GM12878 (cell line): ENCODE measurements at regions of chr14 and their contacts with region 1.

Region 1: GRCh38 chr14:76352639-76353281 is 23.2 kb upstream of the ESRRB start:
- DNase-seq: peak; percentile 4
- ATAC-seq: peak; percentile 98
- H3K4me3 ChIP-seq: no peak overlapping the region
- H3K27ac ChIP-seq: no peak overlapping the region
- H3K4me1 ChIP-seq: 0 out of 2 replicates have a peak, but pooled peaks cover 3% of the 10 kb centered on the region
- H3K27me3 ChIP-seq: no peaks in the 10 kb centered on the region
- CTCF ChIP-seq: peak; percentile 71 to 89 (median 86)
- EP300 ChIP-seq: no peak
- POLR2A ChIP-seq: no peak
- RAD21 ChIP-seq: peak; percentile 93

Region 2: GRCh38 chr14:76050797-76051392 is 301.9 kb before region 1 on chr14:
- CTCF ChIA-PET with region 1: interaction called, 165 read pairs
- POLR2A ChIA-PET with region 1: interaction called, 3 read pairs
- RAD21 ChIA-PET with region 1: interaction called, 41 read pairs
- SMC1A ChIA-PET with region 1: interaction called, 78 read pairs
- in situ Hi-C with region 1: loop called (anchors 10 kb)
- intact Hi-C with region 1: loop called (anchors 1 kb)
- DNase-seq: peak; percentile 21
- ATAC-seq: peak; percentile 82
- H3K4me3 ChIP-seq: no peak overlapping the region
- H3K27ac ChIP-seq: no peak overlapping the region
- H3K4me1 ChIP-seq: peaks cover under 1% of the 10 kb centered on the region; the same call in 1 of the 2 replicates
- H3K27me3 ChIP-seq: no peaks in the 10 kb centered on the region
- CTCF ChIP-seq: peak; percentile 53 to 88 (median 80); a peak in 5 of 6 replicates
- EP300 ChIP-seq: no peak
- POLR2A ChIP-seq: no peak
- RAD21 ChIP-seq: peak; percentile 100

Region 3: DNA sequence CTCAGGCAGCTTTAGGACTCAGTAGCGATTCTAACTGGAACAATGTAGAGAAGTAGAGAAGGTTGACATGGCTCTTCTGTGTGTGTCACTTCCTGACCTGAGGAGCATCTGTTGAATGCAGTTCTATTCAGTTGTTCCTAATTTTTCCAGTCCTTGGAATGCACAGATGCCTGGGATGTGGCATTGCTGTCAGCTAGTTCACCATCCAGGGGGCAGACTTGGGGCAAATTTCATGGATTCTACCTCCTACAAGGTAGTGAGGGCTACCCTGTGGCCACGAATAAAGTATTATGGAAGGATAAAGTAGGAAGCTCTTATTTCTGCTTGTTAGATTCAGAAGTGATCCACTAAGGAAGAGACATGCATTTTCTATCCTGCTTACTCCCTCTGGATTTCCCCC is 275.4 kb before region 1 on chr14:
- CTCF ChIA-PET with region 1: interaction called, 4 read pairs
- POLR2A ChIA-PET with region 1: no interaction called
- RAD21 ChIA-PET with region 1: no interaction called
- SMC1A ChIA-PET with region 1: interaction called, 15 read pairs
- in situ Hi-C with region 1: no loop called
- intact Hi-C with region 1: no loop called
- DNase-seq: no peak
- ATAC-seq: no peak
- H3K4me3 ChIP-seq: no peak overlapping the region
- H3K27ac ChIP-seq: no peak overlapping the region
- H3K4me1 ChIP-seq: no peaks in the 10 kb centered on the region
- H3K27me3 ChIP-seq: no peaks in the 10 kb centered on the region
- CTCF ChIP-seq: no peak; a peak in 2 of 6 replicates
- EP300 ChIP-seq: no peak
- POLR2A ChIP-seq: no peak
- RAD21 ChIP-seq: no peak

Region 4: GRCh38 chr14:76151398-76152339 is 201.1 kb before region 1 on chr14 and contains the start of gene GPATCH2L:
- CTCF ChIA-PET with region 1: interaction called, 34 read pairs
- POLR2A ChIA-PET with region 1: interaction called, 3 read pairs
- RAD21 ChIA-PET with region 1: interaction called, 23 read pairs
- SMC1A ChIA-PET with region 1: interaction called, 14 read pairs
- in situ Hi-C with region 1: no loop called
- intact Hi-C with region 1: loop called (anchors 10 kb)
- DNase-seq: peak; percentile 73
- ATAC-seq: peak; percentile 90
- H3K4me3 ChIP-seq: peak within 1 kb of the TSS; percentile 98
- H3K27ac ChIP-seq: peak within 1 kb of the TSS; percentile 92
- H3K4me1 ChIP-seq: peaks cover 6% of the 10 kb centered on the region; the same call in 1 of the 2 replicates
- H3K27me3 ChIP-seq: no peaks in the 10 kb centered on the region
- CTCF ChIP-seq: no peak
- EP300 ChIP-seq: no peak
- POLR2A ChIP-seq: peak; percentile 92
- RAD21 ChIP-seq: no peak
- polyA plus RNA-seq, gene GPATCH2L: 9.1 to 12.9 TPM

Region 5: DNA sequence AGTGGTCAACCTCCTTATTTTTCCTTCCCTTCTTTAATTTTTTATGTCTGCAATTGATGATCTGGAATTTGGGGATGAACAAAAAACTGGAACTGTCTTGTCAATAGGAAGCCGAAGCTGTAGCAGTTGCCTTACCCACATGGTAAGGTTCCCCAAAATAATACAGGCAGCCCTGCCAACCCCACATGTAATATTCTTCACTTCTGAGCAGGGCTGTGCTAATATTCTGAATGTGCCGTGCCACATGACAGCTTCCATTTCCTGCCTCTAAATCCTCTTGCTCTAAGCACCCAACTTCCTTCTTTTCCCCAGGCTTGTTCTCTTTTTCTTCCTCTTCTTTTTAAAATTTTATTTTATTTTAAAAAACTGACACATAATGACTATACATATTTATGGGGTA is 161.5 kb before region 1 on chr14:
- CTCF ChIA-PET with region 1: interaction called, 70 read pairs
- POLR2A ChIA-PET with region 1: interaction called, 4 read pairs
- RAD21 ChIA-PET with region 1: interaction called, 19 read pairs
- SMC1A ChIA-PET with region 1: interaction called, 53 read pairs
- in situ Hi-C with region 1: no loop called
- intact Hi-C with region 1: no loop called
- DNase-seq: no peak
- ATAC-seq: peak; percentile 48
- H3K4me3 ChIP-seq: no peak overlapping the region
- H3K27ac ChIP-seq: peak overlapping the region; percentile 99
- H3K4me1 ChIP-seq: peaks cover 48% of the 10 kb centered on the region
- H3K27me3 ChIP-seq: no peaks in the 10 kb centered on the region
- CTCF ChIP-seq: no peak
- EP300 ChIP-seq: no peak
- POLR2A ChIP-seq: no peak
- RAD21 ChIP-seq: no peak

Region 6: GRCh38 chr14:76337635-76338545 is 14.9 kb before region 1 on chr14:
- CTCF ChIA-PET with region 1: interaction called, 12 read pairs
- POLR2A ChIA-PET with region 1: no interaction called
- RAD21 ChIA-PET with region 1: interaction called, 4 read pairs
- SMC1A ChIA-PET with region 1: interaction called, 5 read pairs
- in situ Hi-C with region 1: no loop called
- intact Hi-C with region 1: no loop called
- DNase-seq: no peak
- ATAC-seq: no peak
- H3K4me3 ChIP-seq: no peak overlapping the region
- H3K27ac ChIP-seq: no peak overlapping the region
- H3K4me1 ChIP-seq: no peaks in the 10 kb centered on the region
- H3K27me3 ChIP-seq: no peaks in the 10 kb centered on the region; a peak in 1 of 4 replicates
- CTCF ChIP-seq: no peak
- EP300 ChIP-seq: no peak
- POLR2A ChIP-seq: no peak
- RAD21 ChIP-seq: no peak

Region 7: DNA sequence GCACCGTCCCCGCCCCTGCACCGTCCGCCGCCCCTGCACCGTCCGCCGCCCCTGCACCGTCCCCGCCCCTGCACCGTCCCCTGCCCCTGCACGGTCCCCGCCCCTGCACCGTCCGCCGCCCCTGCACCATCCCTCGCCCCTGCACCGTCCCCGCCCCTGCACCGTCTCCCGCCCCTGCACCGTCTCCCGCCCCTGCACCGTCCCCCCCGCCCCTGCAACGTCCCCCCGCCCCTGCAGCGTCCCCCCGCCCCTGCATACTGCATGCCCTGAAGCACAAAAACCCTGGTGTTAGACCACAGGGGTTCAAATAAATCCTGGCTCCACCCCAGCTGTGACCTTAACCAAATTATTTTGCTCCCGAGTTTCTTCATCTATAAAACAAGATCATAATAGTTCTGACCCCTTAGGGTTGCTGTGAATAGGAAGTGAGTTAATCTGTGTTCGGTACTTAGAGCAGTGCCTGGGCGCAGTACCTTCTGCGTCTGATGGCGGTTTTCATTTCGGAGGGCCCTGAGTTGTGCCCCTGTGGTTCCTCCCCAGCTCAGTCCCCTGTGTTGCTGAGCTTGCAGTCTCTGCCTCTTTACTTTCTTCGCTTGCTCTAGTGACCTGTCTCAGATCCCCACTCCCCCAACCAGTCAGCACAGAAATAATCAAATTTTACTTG is 61.3 kb after region 1 on chr14:
- CTCF ChIA-PET with region 1: no interaction called
- POLR2A ChIA-PET with region 1: no interaction called
- RAD21 ChIA-PET with region 1: no interaction called
- SMC1A ChIA-PET with region 1: no interaction called
- in situ Hi-C with region 1: no loop called
- intact Hi-C with region 1: no loop called
- DNase-seq: no peak
- ATAC-seq: no peak
- H3K4me3 ChIP-seq: no peak overlapping the region
- H3K27ac ChIP-seq: no peak overlapping the region
- H3K4me1 ChIP-seq: no peaks in the 10 kb centered on the region; the same call in 1 of the 2 replicates
- H3K27me3 ChIP-seq: peaks cover 3 to 5% of the 10 kb centered on the region in 2 experiments; a peak in 3 of 4 replicates
- CTCF ChIP-seq: no peak
- EP300 ChIP-seq: no peak
- POLR2A ChIP-seq: no peak
- RAD21 ChIP-seq: no peak